ENCODE measurements at regions of chr1 and their contacts with region 1.

Region 1: GRCh38 chr1:206658264-206658980 is 23.1 kb downstream of the DYRK3 start:
- DNase-seq: peak; percentile 85

Region 2: DNA sequence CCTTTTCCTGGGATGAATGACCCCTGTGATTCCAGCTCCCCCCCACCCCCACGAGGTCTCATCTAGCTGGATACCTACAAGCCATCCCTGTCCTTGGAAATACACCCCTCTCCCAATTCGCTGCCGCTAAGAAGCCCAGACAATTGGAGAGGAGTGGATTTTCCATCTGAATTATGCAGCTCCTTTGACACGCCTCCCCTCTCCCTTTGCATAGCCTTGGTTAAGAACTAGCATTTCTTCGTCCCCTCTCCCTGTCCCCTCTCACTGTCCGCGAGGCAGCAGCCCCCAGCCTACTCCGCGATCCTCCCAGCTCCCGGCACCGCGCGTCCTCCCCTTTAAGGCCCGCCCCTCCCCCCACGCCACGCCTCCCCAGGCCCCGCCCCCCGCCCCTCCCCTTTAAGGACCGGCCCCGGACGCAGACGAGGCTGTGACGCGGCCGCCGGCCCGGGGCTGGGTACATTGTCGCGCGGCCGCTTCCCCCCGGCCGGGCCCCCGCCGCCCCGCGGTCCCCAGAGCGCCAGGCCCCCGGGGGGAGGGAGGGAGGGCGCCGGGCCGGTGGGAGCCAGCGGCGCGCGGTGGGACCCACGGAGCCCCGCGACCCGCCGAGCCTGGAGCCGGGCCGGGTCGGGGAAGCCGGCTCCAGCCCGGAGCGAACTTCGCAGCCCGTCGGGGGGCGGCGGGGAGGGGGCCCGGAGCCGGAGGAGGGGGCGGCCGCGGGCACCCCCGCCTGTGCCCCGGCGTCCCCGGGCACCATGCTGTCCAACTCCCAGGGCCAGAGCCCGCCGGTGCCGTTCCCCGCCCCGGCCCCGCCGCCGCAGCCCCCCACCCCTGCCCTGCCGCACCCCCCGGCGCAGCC is 26.3 kb after region 1 on chr1 and contains the start of gene MAPKAPK2:
- intact Hi-C with region 1: loop called (anchors 2 kb)
- DNase-seq: peak; percentile 94
- total RNA-seq, gene MAPKAPK2: 242 TPM